ENCODE measurements at regions of chr7 and their contacts with region 1.

Region 1: GRCh38 chr7:149409895-149410294 is 51.0 kb downstream of the ZNF777 start:
- DNase-seq: no peak
- H3K4me3 ChIP-seq: no peak overlapping the region
- H3K4me3 Mint-ChIP-seq: no peak overlapping the region
- H3K27ac Mint-ChIP-seq: no peak overlapping the region
- H3K4me1 ChIP-seq: no peaks in the 10 kb centered on the region
- H3K4me1 Mint-ChIP-seq: no peaks in the 10 kb centered on the region
- H3K27me3 ChIP-seq: no peaks in the 10 kb centered on the region
- H3K27me3 Mint-ChIP-seq: no peaks in the 10 kb centered on the region
- CTCF ChIP-seq: no peak

Region 2: GRCh38 chr7:149369508-149369907 is 40.4 kb before region 1 on chr7:
- CTCF ChIA-PET with region 1: no interaction called
- POLR2A ChIA-PET with region 1: no interaction called
- intact Hi-C with region 1: loop called (anchors 2 kb)
- DNase-seq: peak; percentile 58 to 74
- H3K4me3 ChIP-seq: no peak overlapping the region
- H3K4me3 Mint-ChIP-seq: peak overlapping the region; percentile 60
- H3K27ac Mint-ChIP-seq: peak overlapping the region; percentile 88
- H3K4me1 ChIP-seq: peaks cover 11% of the 10 kb centered on the region
- H3K4me1 Mint-ChIP-seq: peaks cover 9% of the 10 kb centered on the region
- H3K27me3 ChIP-seq: no peaks in the 10 kb centered on the region
- H3K27me3 Mint-ChIP-seq: no peaks in the 10 kb centered on the region
- CTCF ChIP-seq: no peak

Measured in Caco-2 (cell line).